ENCODE measurements at regions of chr1 and their contacts with region 1.

Region 1: GRCh38 chr1:212608209-212608955 is at the start of gene ATF3:
- DNase-seq: peak; percentile 94
- ATAC-seq: peak; percentile 80
- H3K4me3 ChIP-seq: peak within 1 kb of the TSS; percentile 87
- H3K27ac ChIP-seq: peak within 1 kb of the TSS; percentile 62
- H3K4me1 ChIP-seq: peaks cover 19% of the 10 kb centered on the region
- H3K27me3 ChIP-seq: peaks cover 0 to 6% of the 10 kb centered on the region in 2 experiments; a peak in 1 of 4 replicates
- CTCF ChIP-seq: no peak
- EP300 ChIP-seq: peak in 1 of 2 experiments; percentile 9; a peak in 1 of 4 replicates
- POLR2A ChIP-seq: peak; percentile 99
- RAD21 ChIP-seq: no peak
- polyA plus RNA-seq, gene ATF3: 3.0 to 3.4 TPM

Region 2: GRCh38 chr1:212007886-212008285 is 600.5 kb before region 1 on chr1:
- CTCF ChIA-PET with region 1: no interaction called
- POLR2A ChIA-PET with region 1: no interaction called
- RAD21 ChIA-PET with region 1: no interaction called
- SMC1A ChIA-PET with region 1: no interaction called
- in situ Hi-C with region 1: no loop called
- intact Hi-C with region 1: no loop called
- DNase-seq: no peak
- ATAC-seq: no peak
- H3K4me3 ChIP-seq: no peak overlapping the region
- H3K27ac ChIP-seq: no peak overlapping the region
- H3K4me1 ChIP-seq: no peaks in the 10 kb centered on the region
- H3K27me3 ChIP-seq: no peaks in the 10 kb centered on the region
- CTCF ChIP-seq: no peak
- EP300 ChIP-seq: no peak
- POLR2A ChIP-seq: no peak
- RAD21 ChIP-seq: no peak

Region 3: DNA sequence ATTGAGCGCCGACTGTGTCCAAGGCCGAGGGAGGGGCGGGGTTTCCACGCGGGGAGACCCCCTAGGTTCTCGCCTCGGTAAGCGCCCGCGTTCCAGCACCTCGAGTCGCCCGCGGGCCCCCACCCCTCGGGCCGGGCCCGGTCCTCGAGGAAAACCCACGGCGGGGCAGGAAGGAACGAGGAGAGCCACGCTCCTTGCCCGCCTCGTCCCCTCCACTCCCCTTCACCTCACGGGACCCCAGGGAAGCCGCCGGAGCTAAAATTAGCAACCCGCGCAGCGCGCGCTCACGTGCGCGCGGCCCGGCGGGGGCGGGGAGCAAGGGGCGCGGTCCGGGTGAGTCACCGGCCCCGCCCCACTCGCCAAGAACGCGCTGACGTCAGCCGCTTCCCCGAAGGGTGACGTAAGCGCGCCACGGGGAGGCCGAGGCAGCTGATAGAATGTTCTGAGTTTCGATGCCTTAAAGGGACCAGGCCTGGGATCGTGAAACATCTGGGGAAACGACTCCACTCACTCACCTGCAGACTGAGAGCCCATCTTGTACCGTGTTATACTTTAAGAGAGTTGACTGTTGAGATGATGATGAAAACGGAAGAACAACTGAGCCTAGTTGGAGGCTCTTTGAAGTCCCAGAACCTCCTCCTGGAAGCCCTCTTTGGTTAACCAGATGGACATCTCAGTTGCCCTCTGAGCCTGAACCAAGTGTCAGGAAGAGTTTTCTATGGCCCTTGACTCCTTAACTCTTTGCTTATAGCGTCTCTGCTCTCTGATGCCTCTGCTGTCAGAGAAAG is 49.5 kb before region 1 on chr1:
- CTCF ChIA-PET with region 1: interaction called, 6 read pairs
- POLR2A ChIA-PET with region 1: interaction called, 10 read pairs
- RAD21 ChIA-PET with region 1: interaction called, 8 read pairs
- SMC1A ChIA-PET with region 1: interaction called, 7 read pairs
- in situ Hi-C with region 1: no loop called
- intact Hi-C with region 1: loop called (anchors 2 kb)
- DNase-seq: peak; percentile 70
- ATAC-seq: peak; percentile 92
- H3K4me3 ChIP-seq: peak overlapping the region; percentile 73
- H3K27ac ChIP-seq: peak overlapping the region; percentile 76
- H3K4me1 ChIP-seq: peaks cover 8% of the 10 kb centered on the region
- H3K27me3 ChIP-seq: no peaks in the 10 kb centered on the region
- CTCF ChIP-seq: no peak
- EP300 ChIP-seq: peak; percentile 46 to 58; a peak in 2 of 4 replicates
- POLR2A ChIP-seq: peak; percentile 71
- RAD21 ChIP-seq: no peak

Region 4: GRCh38 chr1:212586206-212587015 is 22.0 kb before region 1 on chr1:
- CTCF ChIA-PET with region 1: interaction called, 4 read pairs
- POLR2A ChIA-PET with region 1: interaction called, 28 read pairs
- RAD21 ChIA-PET with region 1: interaction called, 7 read pairs
- SMC1A ChIA-PET with region 1: interaction called, 6 read pairs
- in situ Hi-C with region 1: no loop called
- intact Hi-C with region 1: no loop called
- DNase-seq: peak; percentile 58
- ATAC-seq: peak; percentile 97
- H3K4me3 ChIP-seq: no peak overlapping the region
- H3K27ac ChIP-seq: peak overlapping the region; percentile 45
- H3K4me1 ChIP-seq: peaks cover 15% of the 10 kb centered on the region
- H3K27me3 ChIP-seq: no peaks in the 10 kb centered on the region
- CTCF ChIP-seq: no peak
- EP300 ChIP-seq: peak; percentile 80 to 83; a peak in 2 of 4 replicates
- POLR2A ChIP-seq: no peak
- RAD21 ChIP-seq: peak; percentile 31; the same call in 1 of the 2 replicates

Region 5: GRCh38 chr1:212630158-212630900 is 21.9 kb after region 1 on chr1:
- CTCF ChIA-PET with region 1: interaction called, 25 read pairs
- POLR2A ChIA-PET with region 1: interaction called, 4 read pairs
- RAD21 ChIA-PET with region 1: interaction called, 5 read pairs
- SMC1A ChIA-PET with region 1: interaction called, 5 read pairs
- in situ Hi-C with region 1: no loop called
- intact Hi-C with region 1: loop called (anchors 2 kb)
- DNase-seq: no peak
- ATAC-seq: peak; percentile 99
- H3K4me3 ChIP-seq: no peak overlapping the region
- H3K27ac ChIP-seq: no peak overlapping the region
- H3K4me1 ChIP-seq: peaks cover 16% of the 10 kb centered on the region
- H3K27me3 ChIP-seq: no peaks in the 10 kb centered on the region
- CTCF ChIP-seq: peak; percentile 82 to 99 (median 97)
- EP300 ChIP-seq: no peak
- POLR2A ChIP-seq: no peak
- RAD21 ChIP-seq: peak; percentile 81

Region 6: DNA sequence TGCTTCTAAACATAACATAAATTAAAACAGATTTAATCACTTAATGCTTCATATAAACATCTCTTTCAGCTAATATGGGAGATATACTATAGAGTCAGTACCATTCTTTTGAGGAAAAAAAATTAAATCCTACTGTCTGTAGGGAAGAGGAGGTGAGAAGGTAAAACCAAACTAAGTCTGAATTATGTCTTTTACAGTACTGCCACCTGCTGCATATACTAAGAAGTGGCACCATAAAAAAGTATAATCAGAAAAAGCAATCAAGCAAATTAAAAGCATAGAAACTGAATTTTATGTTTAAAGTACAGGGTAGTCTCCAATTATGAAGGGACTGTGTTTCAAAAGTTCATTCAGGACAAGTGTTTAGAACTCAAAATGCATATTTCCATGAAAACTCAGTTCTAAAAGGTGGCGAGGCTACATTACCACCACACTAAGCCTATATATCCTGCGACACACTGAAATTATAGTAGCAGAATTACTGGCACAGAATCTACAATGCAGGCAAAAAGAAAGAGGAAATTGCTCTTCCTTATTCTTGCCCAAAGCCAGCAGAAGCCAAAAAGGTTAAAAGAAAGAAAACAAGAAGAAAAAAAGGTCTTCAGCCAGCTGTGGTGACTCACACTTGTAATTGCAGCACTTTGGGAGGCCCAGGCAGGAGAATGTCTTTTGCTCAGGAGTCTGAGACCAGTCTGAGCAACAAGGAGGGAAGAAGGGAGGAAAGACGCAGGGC is 174.2 kb after region 1 on chr1:
- CTCF ChIA-PET with region 1: interaction called, 5 read pairs
- POLR2A ChIA-PET with region 1: interaction called, 3 read pairs
- RAD21 ChIA-PET with region 1: interaction called, 4 read pairs
- SMC1A ChIA-PET with region 1: interaction called, 14 read pairs
- in situ Hi-C with region 1: no loop called
- intact Hi-C with region 1: loop called (anchors 2 kb)
- DNase-seq: no peak
- ATAC-seq: peak; percentile 68
- H3K4me3 ChIP-seq: no peak overlapping the region
- H3K27ac ChIP-seq: no peak overlapping the region
- H3K4me1 ChIP-seq: peaks cover 10% of the 10 kb centered on the region; the same call in 1 of the 2 replicates
- H3K27me3 ChIP-seq: no peaks in the 10 kb centered on the region
- CTCF ChIP-seq: peak; percentile 53 to 71 (median 64); a peak in 5 of 6 replicates
- EP300 ChIP-seq: no peak
- POLR2A ChIP-seq: no peak
- RAD21 ChIP-seq: peak; percentile 81